Activated naive CD4-positive, alpha-beta T cell treated with anti-CD3 and anti-CD28 coated beads for 36 hours (primary cell): ENCODE measurements at regions of chr4 and their contacts with region 1.

Region 1: GRCh38 chr4:145936142-145936996 is 2.3 kb downstream of the ZNF827 start:
- DNase-seq: peak; percentile 65
- H3K4me3 Mint-ChIP-seq: peak overlapping the region; percentile 100
- H3K27ac Mint-ChIP-seq: peak overlapping the region; percentile 89
- H3K4me1 Mint-ChIP-seq: peaks cover 51% of the 10 kb centered on the region
- H3K27me3 Mint-ChIP-seq: no peaks in the 10 kb centered on the region

Region 2: DNA sequence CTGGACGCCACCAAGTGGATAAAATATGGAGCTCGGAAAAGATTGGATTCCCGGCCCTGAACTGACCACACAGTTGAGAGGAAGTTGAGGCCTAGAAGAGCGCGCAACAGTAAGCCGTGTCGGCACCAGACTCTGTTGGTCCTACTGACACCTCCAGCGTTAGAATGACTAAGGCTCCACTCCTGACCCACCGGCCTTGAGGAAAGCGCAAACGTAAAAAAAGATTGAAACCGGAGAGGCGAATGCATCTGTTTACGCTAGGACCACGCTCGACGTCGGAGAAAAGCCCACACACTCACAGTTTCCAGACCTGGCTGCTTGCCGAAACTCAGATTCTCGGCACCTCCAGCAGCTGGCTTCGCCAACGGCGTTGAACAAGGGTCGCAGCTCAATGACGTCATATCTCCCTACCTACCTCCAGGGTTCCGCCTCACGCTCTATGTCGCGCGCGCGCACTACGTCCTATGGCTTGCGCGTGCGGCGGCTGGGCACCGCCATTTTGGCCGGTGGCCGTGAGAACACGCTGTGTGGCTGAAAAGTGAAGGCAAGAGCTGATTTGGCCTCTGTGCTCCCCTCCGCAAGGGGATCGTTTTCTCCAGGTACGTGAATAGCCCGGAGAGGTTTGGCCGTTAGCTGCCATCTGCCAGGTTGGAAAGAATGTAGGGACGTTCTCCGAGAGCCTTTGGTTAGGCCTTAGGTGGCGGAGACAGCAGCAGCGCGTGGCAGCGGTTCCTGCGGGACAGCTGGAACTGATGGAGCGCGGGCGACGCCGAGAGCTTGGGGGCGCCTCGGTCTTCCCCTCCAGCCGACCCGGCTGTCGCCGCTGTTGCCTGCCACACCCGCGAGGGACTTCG is 838.3 kb before region 1 on chr4 and contains the starts of genes ABCE1 and ANAPC10:
- CTCF ChIA-PET with region 1: no interaction called
- intact Hi-C with region 1: loop called (anchors 1 kb)
- DNase-seq: peak; percentile 97
- H3K4me3 Mint-ChIP-seq: peak within 1 kb of the TSS; percentile 92
- H3K27ac Mint-ChIP-seq: peak within 1 kb of the TSS; percentile 97
- H3K4me1 Mint-ChIP-seq: peaks cover 23% of the 10 kb centered on the region
- H3K27me3 Mint-ChIP-seq: no peaks in the 10 kb centered on the region
- total RNA-seq, gene ABCE1: 164 to 174 TPM
- total RNA-seq, gene ANAPC10: 23.5 to 26.5 TPM

Region 3: DNA sequence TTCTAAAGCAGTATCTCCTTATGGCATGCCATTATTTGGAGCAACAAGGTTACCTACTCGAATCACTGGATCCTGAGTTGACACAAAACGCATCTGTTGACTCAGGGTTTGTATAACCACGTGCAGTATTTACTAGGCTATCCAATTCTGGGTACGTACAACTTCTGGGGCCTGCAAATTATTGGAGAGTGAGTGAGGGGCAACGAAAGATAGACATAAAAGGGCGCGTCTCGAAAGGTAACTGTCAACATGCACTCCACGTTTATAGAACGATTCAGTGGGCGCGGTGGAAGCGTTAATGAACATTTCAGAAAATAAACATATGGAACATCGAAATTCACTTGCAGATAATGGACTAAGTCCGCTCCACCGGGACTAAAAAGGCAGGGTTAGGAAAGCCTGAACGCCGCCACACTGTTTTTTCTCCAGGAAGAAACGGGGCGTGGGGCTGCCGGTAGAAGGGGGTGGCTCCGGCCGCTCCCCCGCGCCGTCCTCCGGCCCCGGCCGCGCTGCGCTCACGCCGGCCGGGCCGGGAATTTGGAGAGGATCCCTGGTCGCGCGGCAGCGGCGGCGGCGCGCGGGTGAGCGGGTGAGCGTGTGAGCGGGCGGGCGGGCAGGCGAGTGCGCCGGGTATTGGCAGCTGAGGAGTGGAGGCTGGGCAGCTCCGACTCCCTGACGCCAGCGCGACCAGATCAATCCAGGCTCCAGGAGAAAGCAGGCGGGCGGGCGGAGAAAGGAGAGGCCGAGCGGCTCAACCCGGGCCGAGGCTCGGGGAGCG is 455.0 kb before region 1 on chr4 and contains the start of gene SMAD1:
- CTCF ChIA-PET with region 1: no interaction called
- intact Hi-C with region 1: loop called (anchors 2 kb)
- DNase-seq: peak; percentile 29
- H3K4me3 Mint-ChIP-seq: peak within 1 kb of the TSS; percentile 73
- H3K27ac Mint-ChIP-seq: no peak within 1 kb of the TSS
- H3K4me1 Mint-ChIP-seq: peaks cover 5% of the 10 kb centered on the region
- H3K27me3 Mint-ChIP-seq: peaks cover 31% of the 10 kb centered on the region
- total RNA-seq, gene SMAD1: 0.57 to 0.79 TPM

Region 4: GRCh38 chr4:145808021-145808650 is 128.2 kb before region 1 on chr4:
- CTCF ChIA-PET with region 1: no interaction called
- intact Hi-C with region 1: loop called (anchors 1 kb)
- DNase-seq: peak; percentile 74
- H3K4me3 Mint-ChIP-seq: peak overlapping the region; percentile 46
- H3K27ac Mint-ChIP-seq: peak overlapping the region; percentile 91
- H3K4me1 Mint-ChIP-seq: peaks cover 44% of the 10 kb centered on the region
- H3K27me3 Mint-ChIP-seq: no peaks in the 10 kb centered on the region

Region 5: GRCh38 chr4:145868637-145869409 is 67.5 kb before region 1 on chr4:
- CTCF ChIA-PET with region 1: no interaction called
- intact Hi-C with region 1: loop called (anchors 2 kb)
- DNase-seq: no peak
- H3K4me3 Mint-ChIP-seq: no peak overlapping the region
- H3K27ac Mint-ChIP-seq: no peak overlapping the region
- H3K4me1 Mint-ChIP-seq: peaks cover 26% of the 10 kb centered on the region
- H3K27me3 Mint-ChIP-seq: no peaks in the 10 kb centered on the region

Region 6: GRCh38 chr4:146175541-146176453 is 239.4 kb after region 1 on chr4 and contains the start of gene LSM6:
- CTCF ChIA-PET with region 1: interaction called, 3 read pairs
- intact Hi-C with region 1: loop called (anchors 1 kb)
- DNase-seq: peak; percentile 89
- H3K4me3 Mint-ChIP-seq: peak within 1 kb of the TSS; percentile 80
- H3K27ac Mint-ChIP-seq: peak within 1 kb of the TSS; percentile 90
- H3K4me1 Mint-ChIP-seq: peaks cover 48% of the 10 kb centered on the region
- H3K27me3 Mint-ChIP-seq: no peaks in the 10 kb centered on the region
- total RNA-seq, gene LSM6: 62.9 to 65.8 TPM